Activated CD8-positive, alpha-beta T cell treated with anti-CD3 and anti-CD28 coated beads, Interleukin-2, amount 10 ng/mL, durations not matched to agents 7 days and 5 days (primary cell): ENCODE measurements at regions of chr15 and their contacts with region 1.

Region 1: DNA sequence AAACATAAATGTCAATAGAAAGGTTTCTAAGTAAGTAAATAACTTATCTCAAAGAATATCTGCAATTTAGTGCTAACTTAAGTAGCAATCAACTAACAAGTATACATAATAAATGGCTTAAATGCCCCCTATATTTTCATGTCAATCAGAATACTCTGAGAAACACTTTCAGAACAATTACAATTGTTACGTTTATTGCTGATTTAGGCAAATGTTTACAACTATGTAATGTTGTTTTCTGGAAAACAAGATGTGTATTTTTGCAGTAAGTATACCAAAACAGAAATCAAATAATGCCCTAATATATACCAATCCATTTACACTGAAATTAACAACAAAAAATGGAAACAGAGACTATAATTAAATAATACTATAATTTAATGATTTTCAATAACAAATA is 13.2 kb downstream of the TUBGCP5 start:
- DNase-seq: no peak
- ATAC-seq: no peak
- H3K4me3 Mint-ChIP-seq: no peak overlapping the region
- H3K27ac Mint-ChIP-seq: no peak overlapping the region
- H3K4me1 Mint-ChIP-seq: no peaks in the 10 kb centered on the region
- H3K27me3 Mint-ChIP-seq: no peaks in the 10 kb centered on the region

Region 2: DNA sequence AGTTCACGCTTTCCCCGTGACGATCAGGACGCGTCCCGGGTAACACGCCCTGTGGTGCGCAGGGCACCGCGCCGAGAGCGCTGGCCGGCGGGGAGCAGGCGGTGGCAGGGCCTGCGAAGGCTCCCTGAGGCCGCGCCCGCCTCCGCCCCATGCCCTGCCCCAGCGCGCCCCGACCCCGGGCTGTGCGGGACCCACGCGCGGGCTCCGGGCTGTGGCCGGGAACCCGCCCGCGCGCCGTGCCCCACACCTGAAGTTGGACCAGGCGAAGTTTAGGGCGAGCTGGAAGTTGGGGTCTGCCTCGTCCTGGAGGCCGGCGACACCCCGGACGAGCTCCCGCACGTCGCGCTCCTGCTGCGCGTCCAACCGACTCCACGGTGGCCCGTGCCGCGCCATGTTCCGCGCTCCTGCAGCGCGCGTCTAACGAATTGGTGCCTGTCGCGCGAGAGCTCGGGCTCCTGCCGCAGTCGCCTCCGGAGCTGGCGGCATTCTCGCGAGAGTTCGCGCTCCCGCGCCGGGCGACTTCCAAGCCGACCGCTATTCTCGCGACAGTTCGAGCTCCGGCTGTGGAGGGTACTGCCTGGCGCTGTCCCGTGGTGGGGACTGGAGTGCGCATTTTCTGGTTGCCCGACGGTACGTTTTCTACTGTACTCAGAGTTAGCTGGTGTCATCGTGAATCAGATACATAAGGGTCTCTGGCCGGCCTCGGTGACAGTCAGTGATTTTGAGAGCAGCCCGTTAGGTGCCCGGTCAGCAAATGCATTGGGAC is 13.1 kb after region 1 on chr15 and contains the start of gene TUBGCP5:
- CTCF ChIA-PET with region 1: interaction called, 15 read pairs
- POLR2A ChIA-PET with region 1: interaction called, 13 read pairs
- DNase-seq: peak; percentile 99
- ATAC-seq: peak; percentile 97
- H3K4me3 Mint-ChIP-seq: peak within 1 kb of the TSS; percentile 88
- H3K27ac Mint-ChIP-seq: peak within 1 kb of the TSS; percentile 98
- H3K4me1 Mint-ChIP-seq: peaks cover 22% of the 10 kb centered on the region
- H3K27me3 Mint-ChIP-seq: no peaks in the 10 kb centered on the region
- total RNA-seq, gene TUBGCP5: 25.3 to 27.3 TPM